Stomach (tissue), 19 donors: ENCODE measurements at regions of chr17 and their contacts with region 1.

Region 1: GRCh38 chr17:27601069-27601975 is 29.7 kb upstream of the LGALS9 start:
- DNase-seq: peak; percentile 89 to 93
- H3K4me3 ChIP-seq: no peak overlapping the region
- H3K27ac ChIP-seq: no peak overlapping the region
- H3K4me1 ChIP-seq: peaks cover 7 to 44% (median 24%) of the 10 kb centered on the region in 4 donors
- H3K27me3 ChIP-seq: no peaks in the 10 kb centered on the region
- CTCF ChIP-seq: peak in 6 of 7 experiments; percentile 78 to 93 (median 89)
- EP300 ChIP-seq: no peak
- POLR2A ChIP-seq: no peak

Region 2: GRCh38 chr17:27236717-27237315 is 364.5 kb before region 1 on chr17:
- intact Hi-C with region 1: loop called (anchors 10 kb)
- DNase-seq: peak; percentile 84 to 90
- H3K4me3 ChIP-seq: no peak overlapping the region
- H3K27ac ChIP-seq: no peak overlapping the region
- H3K4me1 ChIP-seq: peaks cover 3 to 28% (median 9%) of the 10 kb centered on the region in 4 donors
- H3K27me3 ChIP-seq: no peaks in the 10 kb centered on the region
- CTCF ChIP-seq: peak in 5 of 7 experiments; percentile 82 to 96 (median 94)
- EP300 ChIP-seq: no peak
- POLR2A ChIP-seq: no peak

Region 3: DNA sequence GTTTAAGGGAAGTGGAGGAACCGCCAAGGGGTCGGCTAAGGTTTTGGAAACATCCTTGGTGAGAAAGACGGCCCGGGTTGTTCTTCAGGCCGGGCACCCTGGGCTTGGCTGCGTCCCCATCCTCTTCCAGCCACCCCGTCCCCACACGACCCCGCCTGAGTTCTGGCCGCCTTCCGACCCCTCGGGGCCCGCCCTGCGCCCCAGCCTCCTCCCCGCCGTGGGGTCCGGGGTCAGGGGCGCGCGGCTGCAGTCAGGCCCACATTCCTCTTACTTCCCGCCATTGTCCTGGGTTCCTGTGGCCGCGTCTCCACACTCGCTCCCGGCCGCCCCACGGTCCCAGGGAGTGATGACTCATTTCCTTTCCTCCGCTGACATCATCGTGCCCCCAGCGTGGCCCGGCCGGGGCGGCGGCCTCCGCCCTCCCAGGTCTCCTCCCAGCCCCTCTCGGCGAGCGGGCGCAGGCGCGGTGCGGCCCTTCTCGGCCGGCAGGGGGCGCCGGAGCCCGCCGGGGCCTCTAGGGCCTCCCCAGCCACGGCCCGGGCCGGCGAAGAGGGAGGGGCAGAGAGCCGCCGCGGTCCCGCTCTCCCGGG is 247.8 kb before region 1 on chr17:
- intact Hi-C with region 1: loop called (anchors 2 kb)
- DNase-seq: peak; percentile 88 to 97
- H3K4me3 ChIP-seq: peak overlapping the region; percentile 53 to 62 (median 58)
- H3K27ac ChIP-seq: peak overlapping the region; percentile 86 to 97 (median 93)
- H3K4me1 ChIP-seq: peaks cover 17 to 26% (median 24%) of the 10 kb centered on the region in 4 donors
- H3K27me3 ChIP-seq: no peaks in the 10 kb centered on the region
- CTCF ChIP-seq: peak in 4 of 7 experiments; percentile 40 to 99 (median 96)
- EP300 ChIP-seq: no peak
- POLR2A ChIP-seq: peak in 1 of 4 donors; percentile 90